Dorsolateral prefrontal cortex (tissue), 120 donors: ENCODE measurements at regions of chr17 and their contacts with region 1.

Region 1: GRCh38 chr17:28552246-28552999 is at the start of gene UNC119:
- DNase-seq: peak; percentile 34 to 83 (median 68)
- H3K4me3 ChIP-seq: peak within 1 kb of the TSS; percentile 56 to 96 (median 85)
- H3K27ac ChIP-seq: peak within 1 kb of the TSS in 41 of 59 donors; percentile 1 to 88 (median 68)
- H3K27me3 ChIP-seq: no peaks in the 10 kb centered on the region
- CTCF ChIP-seq: peak in 1 of 56 donors; percentile 21
- total RNA-seq, gene UNC119: 17.5 to 97.1 (median 51.6) TPM

Region 2: GRCh38 chr17:28053044-28053670 is 499.3 kb before region 1 on chr17:
- intact Hi-C with region 1: no loop called
- DNase-seq: no peak
- H3K4me3 ChIP-seq: peak overlapping the region in 7 of 59 donors; percentile 0 to 23 (median 5)
- H3K27ac ChIP-seq: peak overlapping the region in 55 of 59 donors; percentile 0 to 91 (median 61)
- H3K27me3 ChIP-seq: no peaks in the 10 kb centered on the region
- CTCF ChIP-seq: no peak

Region 3: GRCh38 chr17:28371245-28372202 is 180.9 kb before region 1 on chr17 and contains the start of gene SARM1:
- intact Hi-C with region 1: loop called (anchors 5 to 10 kb)
- DNase-seq: peak; percentile 65 to 92 (median 83)
- H3K4me3 ChIP-seq: peak within 1 kb of the TSS; percentile 55 to 83 (median 73)
- H3K27ac ChIP-seq: peak within 1 kb of the TSS in 58 of 59 donors; percentile 39 to 93 (median 86)
- H3K27me3 ChIP-seq: no peaks in the 10 kb centered on the region
- CTCF ChIP-seq: peak in 1 of 56 donors; percentile 12
- total RNA-seq, gene SARM1: 20.6 to 48.1 (median 33.1) TPM

Region 4: DNA sequence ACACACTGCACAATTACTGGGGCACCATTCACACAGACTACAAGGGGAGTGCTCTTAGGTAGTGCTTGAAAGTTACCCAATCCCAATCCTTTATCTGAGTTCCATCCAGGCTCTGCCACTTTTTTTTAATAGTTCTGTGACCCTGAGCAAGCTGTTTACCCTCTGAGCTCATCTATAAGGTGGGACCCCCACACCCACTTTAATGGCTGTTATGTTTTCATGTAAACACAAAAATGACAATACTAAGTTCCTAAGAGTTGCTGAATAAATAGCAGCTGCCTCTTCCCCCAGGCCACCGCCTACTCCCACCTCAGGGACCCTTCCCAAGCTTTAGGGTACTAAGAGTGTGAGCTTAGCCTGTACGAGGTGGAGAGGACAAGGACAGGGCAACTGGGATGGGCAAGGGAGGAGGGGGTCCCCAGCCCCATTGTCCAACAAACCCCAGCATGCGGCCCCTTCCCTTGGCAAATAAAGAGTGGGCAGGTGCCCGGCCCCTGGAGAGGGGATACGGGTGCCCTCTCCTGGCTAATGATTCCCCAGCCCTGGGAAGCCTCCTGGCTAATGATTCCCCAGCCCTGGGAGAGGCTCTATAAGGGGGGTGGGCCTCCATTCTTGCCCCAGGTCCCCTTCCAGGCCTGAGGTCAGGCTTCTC is 64.4 kb before region 1 on chr17:
- intact Hi-C with region 1: loop called in 1 of 2 experiments (anchors 5 kb)
- DNase-seq: no peak
- H3K4me3 ChIP-seq: no peak overlapping the region
- H3K27ac ChIP-seq: no peak overlapping the region
- H3K27me3 ChIP-seq: no peaks in the 10 kb centered on the region
- CTCF ChIP-seq: no peak

Region 5: GRCh38 chr17:28612936-28613872 is 60.8 kb after region 1 on chr17:
- intact Hi-C with region 1: loop called in 1 of 2 experiments (anchors 2 kb)
- DNase-seq: peak in 4 of 10 donors; percentile 20 to 51 (median 32)
- H3K4me3 ChIP-seq: peak overlapping the region in 56 of 59 donors; percentile 3 to 60 (median 43)
- H3K27ac ChIP-seq: peak overlapping the region in 53 of 59 donors; percentile 29 to 98 (median 80)
- H3K27me3 ChIP-seq: no peaks in the 10 kb centered on the region
- CTCF ChIP-seq: peak; percentile 31 to 83 (median 68)

Region 6: GRCh38 chr17:29821897-29822296 is 1269.5 kb after region 1 on chr17:
- intact Hi-C with region 1: no loop called
- DNase-seq: no peak
- H3K4me3 ChIP-seq: no peak overlapping the region
- H3K27ac ChIP-seq: no peak overlapping the region
- H3K27me3 ChIP-seq: no peaks in the 10 kb centered on the region
- CTCF ChIP-seq: no peak